Panc1 (cell line): ENCODE measurements at regions of chr10 and their contacts with region 1.

Region 1: DNA sequence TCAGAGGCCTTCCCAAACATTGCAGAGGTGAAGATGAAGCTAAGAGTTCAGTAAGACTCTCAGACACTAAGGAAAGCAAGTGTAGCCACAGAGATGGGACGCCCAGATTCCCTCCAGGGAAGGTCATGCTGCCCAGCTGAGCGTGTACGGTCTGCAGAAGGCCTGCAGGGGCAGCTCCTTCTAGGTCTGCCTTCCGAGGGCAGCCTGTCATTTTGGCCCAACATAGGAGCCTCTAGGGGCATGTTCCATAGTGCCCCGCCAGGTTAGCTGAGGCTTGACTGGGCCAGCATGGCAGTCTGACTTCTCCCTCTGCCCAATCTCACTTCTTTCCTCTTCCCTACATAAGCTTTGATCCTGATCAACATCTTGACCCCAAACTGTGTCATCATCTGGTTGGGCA is 130.7 kb downstream of the PIP4K2A start:
- DNase-seq: no peak
- ATAC-seq: no peak
- H3K4me3 ChIP-seq: no peak overlapping the region
- H3K27ac ChIP-seq: no peak overlapping the region
- H3K4me1 ChIP-seq: no peaks in the 10 kb centered on the region
- H3K27me3 ChIP-seq: no peaks in the 10 kb centered on the region
- CTCF ChIP-seq: no peak

Region 2: GRCh38 chr10:22277705-22278104 is 306.0 kb before region 1 on chr10:
- CTCF ChIA-PET with region 1: no interaction called
- POLR2A ChIA-PET with region 1: no interaction called
- in situ Hi-C with region 1: no loop called
- intact Hi-C with region 1: no loop called
- DNase-seq: peak; percentile 28
- ATAC-seq: peak; percentile 94
- H3K4me3 ChIP-seq: peak overlapping the region; percentile 50 to 77
- H3K27ac ChIP-seq: peak overlapping the region; percentile 79
- H3K4me1 ChIP-seq: peaks cover 2% of the 10 kb centered on the region; the same call in 1 of the 2 replicates
- H3K27me3 ChIP-seq: no peaks in the 10 kb centered on the region
- CTCF ChIP-seq: no peak

Region 3: GRCh38 chr10:22630234-22631174 is 46.8 kb after region 1 on chr10:
- CTCF ChIA-PET with region 1: no interaction called
- POLR2A ChIA-PET with region 1: no interaction called
- in situ Hi-C with region 1: no loop called
- intact Hi-C with region 1: no loop called
- DNase-seq: no peak
- ATAC-seq: no peak
- H3K4me3 ChIP-seq: no peak overlapping the region
- H3K27ac ChIP-seq: no peak overlapping the region
- H3K4me1 ChIP-seq: peaks cover 25% of the 10 kb centered on the region
- H3K27me3 ChIP-seq: no peaks in the 10 kb centered on the region
- CTCF ChIP-seq: no peak

Region 4: DNA sequence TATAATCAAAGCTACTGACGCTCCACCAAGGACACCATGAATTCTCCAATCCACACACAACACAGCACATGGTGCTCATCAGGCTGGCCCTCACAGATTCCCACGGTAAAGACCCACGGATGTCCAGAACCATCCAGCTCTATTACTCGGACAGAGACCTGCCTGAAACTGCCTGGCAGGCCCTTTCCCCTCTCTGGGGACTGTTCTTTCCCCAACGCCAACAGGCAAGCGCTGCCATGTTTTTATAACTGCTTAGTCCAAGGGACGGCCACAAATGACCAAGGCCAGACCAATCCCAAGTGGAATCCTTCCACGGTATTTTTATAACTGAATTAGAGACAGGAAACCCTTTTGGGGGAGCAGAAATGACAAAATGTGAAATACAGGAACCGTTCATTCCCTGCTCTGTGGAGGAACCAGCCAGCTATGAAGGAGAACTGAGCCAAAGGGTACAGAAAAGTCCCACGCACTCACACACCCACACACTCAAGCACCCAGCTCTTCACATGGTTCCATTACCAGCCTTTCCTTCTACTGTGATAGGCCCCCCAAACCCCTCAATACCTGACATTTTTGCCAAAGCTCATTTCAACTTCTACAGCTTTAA is 126.6 kb after region 1 on chr10:
- CTCF ChIA-PET with region 1: interaction called, 12 read pairs
- POLR2A ChIA-PET with region 1: no interaction called
- in situ Hi-C with region 1: no loop called
- intact Hi-C with region 1: no loop called
- DNase-seq: no peak
- ATAC-seq: no peak
- H3K4me3 ChIP-seq: no peak overlapping the region
- H3K27ac ChIP-seq: no peak overlapping the region
- H3K4me1 ChIP-seq: peaks cover 12% of the 10 kb centered on the region
- H3K27me3 ChIP-seq: no peaks in the 10 kb centered on the region
- CTCF ChIP-seq: no peak